CD4-positive, alpha-beta memory T cell (primary cell): ENCODE measurements at regions of chr5 and their contacts with region 1.

Region 1: GRCh38 chr5:73201547-73202513 is 28.8 kb downstream of the TMEM174 start:
- DNase-seq: peak; percentile 53 to 62 (median 55)
- H3K4me3 ChIP-seq: no peak overlapping the region
- H3K4me3 Mint-ChIP-seq: peak overlapping the region in 6 of 8 donors; percentile 31 to 77 (median 47)
- H3K27ac ChIP-seq: no peak overlapping the region
- H3K27ac Mint-ChIP-seq: no peak overlapping the region
- H3K4me1 ChIP-seq: peaks cover 7% of the 10 kb centered on the region
- H3K4me1 Mint-ChIP-seq: peaks cover 0 to 6% (median 3%) of the 10 kb centered on the region in 4 donors
- H3K27me3 ChIP-seq: peaks cover 4% of the 10 kb centered on the region
- H3K27me3 Mint-ChIP-seq: peaks cover 34 to 36% of the 10 kb centered on the region in 2 donors

Region 2: DNA sequence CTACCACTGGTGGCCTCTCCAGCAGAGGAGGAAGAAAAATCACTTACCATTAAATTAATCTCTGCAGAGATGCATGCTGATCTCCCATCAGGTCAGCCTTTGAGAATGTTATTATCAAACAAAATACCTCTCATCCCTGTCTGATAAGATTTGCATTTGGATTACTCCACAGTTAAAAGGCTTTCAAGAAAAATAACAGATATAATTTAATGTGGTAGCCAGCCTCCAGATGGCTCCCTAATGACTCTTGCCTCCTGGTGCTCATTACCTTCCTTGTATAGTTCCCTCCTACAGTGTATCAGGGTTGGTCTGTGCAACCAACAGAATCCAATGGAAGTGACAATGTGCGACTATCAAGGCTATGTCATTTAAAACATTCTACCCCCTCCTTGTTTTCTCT is 448.9 kb before region 1 on chr5:
- CTCF ChIA-PET with region 1: no interaction called
- POLR2A ChIA-PET with region 1: no interaction called
- intact Hi-C with region 1: loop called (anchors 2 kb)
- DNase-seq: no peak
- H3K4me3 ChIP-seq: no peak overlapping the region
- H3K4me3 Mint-ChIP-seq: no peak overlapping the region
- H3K27ac ChIP-seq: no peak overlapping the region
- H3K27ac Mint-ChIP-seq: no peak overlapping the region
- H3K4me1 ChIP-seq: no peaks in the 10 kb centered on the region
- H3K4me1 Mint-ChIP-seq: no peaks in the 10 kb centered on the region
- H3K27me3 ChIP-seq: no peaks in the 10 kb centered on the region
- H3K27me3 Mint-ChIP-seq: peaks cover 3 to 4% of the 10 kb centered on the region in 2 donors

Region 3: DNA sequence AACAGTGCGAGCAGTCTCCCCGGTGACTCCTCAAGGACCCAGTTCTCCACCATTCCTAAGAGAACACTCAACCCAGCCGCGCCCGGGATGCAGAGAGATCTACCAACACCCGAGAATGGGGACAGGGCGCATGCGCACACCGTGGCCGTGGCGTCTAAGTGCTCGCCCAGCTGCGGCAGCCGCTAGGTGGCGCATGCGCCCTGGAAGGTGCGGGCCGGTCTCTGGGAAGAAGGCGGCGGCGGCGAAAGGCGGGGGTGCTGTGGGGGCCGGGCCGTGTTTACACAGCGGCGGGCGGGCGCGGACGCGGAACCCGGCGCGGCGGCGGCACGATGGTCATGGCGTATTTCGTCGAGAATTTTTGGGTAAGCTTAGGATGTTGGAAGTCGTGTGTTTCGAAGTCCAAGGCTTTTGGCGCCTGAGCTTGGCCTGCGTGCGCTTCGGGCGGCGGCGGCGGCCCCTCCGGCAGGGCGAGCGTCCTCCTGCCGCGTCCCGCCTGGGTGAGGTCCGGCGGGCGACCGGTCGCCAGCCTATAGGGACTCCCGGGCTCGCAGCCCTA is 246.0 kb before region 1 on chr5 and contains the start of gene FCHO2:
- CTCF ChIA-PET with region 1: interaction called, 10 read pairs
- POLR2A ChIA-PET with region 1: no interaction called
- intact Hi-C with region 1: loop called (anchors 1 kb)
- DNase-seq: peak; percentile 92 to 95 (median 93)
- H3K4me3 ChIP-seq: peak within 1 kb of the TSS; percentile 85 to 96
- H3K4me3 Mint-ChIP-seq: peak within 1 kb of the TSS; percentile 90 to 99 (median 94)
- H3K27ac ChIP-seq: peak within 1 kb of the TSS; percentile 29
- H3K27ac Mint-ChIP-seq: peak within 1 kb of the TSS; percentile 85 to 91 (median 87)
- H3K4me1 ChIP-seq: peaks cover 15% of the 10 kb centered on the region
- H3K4me1 Mint-ChIP-seq: peaks cover 13 to 19% (median 13%) of the 10 kb centered on the region in 4 donors
- H3K27me3 ChIP-seq: no peaks in the 10 kb centered on the region
- H3K27me3 Mint-ChIP-seq: peaks cover 14 to 34% of the 10 kb centered on the region in 2 donors
- total RNA-seq, gene FCHO2: 6.1 to 6.3 TPM

Region 4: GRCh38 chr5:73088026-73088425 is 113.8 kb before region 1 on chr5:
- CTCF ChIA-PET with region 1: interaction called, 3 read pairs
- POLR2A ChIA-PET with region 1: no interaction called
- intact Hi-C with region 1: loop called (anchors 2 kb)
- DNase-seq: no peak
- H3K4me3 ChIP-seq: no peak overlapping the region
- H3K4me3 Mint-ChIP-seq: no peak overlapping the region
- H3K27ac ChIP-seq: no peak overlapping the region
- H3K27ac Mint-ChIP-seq: no peak overlapping the region
- H3K4me1 ChIP-seq: no peaks in the 10 kb centered on the region
- H3K4me1 Mint-ChIP-seq: no peaks in the 10 kb centered on the region
- H3K27me3 ChIP-seq: no peaks in the 10 kb centered on the region
- H3K27me3 Mint-ChIP-seq: peaks cover 0 to 1% of the 10 kb centered on the region in 2 donors

Region 5: DNA sequence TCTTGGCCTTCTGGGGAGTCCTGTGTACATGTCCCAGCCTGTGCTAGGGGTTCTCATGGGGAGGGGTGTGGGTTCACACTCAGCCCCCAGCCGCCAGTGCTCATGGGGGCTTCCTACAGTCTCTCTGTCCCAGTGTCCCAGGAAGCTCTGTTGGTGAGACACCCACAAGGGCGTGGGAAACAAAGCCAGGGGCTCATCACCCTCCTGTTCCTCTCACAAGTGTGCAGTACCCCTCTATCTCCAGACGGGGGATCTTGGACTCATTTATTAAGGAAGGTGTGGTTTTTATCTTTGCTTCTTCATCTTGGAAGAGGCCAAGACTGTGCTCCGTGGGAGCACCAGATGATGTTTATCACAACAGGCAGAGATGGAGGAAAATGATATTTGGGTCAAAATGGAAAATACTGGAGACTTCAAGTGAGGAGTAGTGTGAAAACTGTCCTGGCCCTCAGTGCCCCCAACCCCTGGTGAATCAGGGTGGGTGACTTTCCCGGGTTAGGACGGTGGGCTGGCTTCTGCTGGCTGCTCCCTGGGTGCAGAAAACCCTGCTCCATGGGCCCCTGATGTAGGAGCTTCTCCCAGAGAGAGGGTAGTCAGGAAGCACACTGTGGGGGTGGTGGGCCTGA is 66.3 kb before region 1 on chr5:
- CTCF ChIA-PET with region 1: no interaction called
- POLR2A ChIA-PET with region 1: no interaction called
- intact Hi-C with region 1: loop called (anchors 1 kb)
- DNase-seq: no peak
- H3K4me3 ChIP-seq: no peak overlapping the region
- H3K4me3 Mint-ChIP-seq: no peak overlapping the region
- H3K27ac ChIP-seq: no peak overlapping the region
- H3K27ac Mint-ChIP-seq: no peak overlapping the region
- H3K4me1 ChIP-seq: no peaks in the 10 kb centered on the region
- H3K4me1 Mint-ChIP-seq: no peaks in the 10 kb centered on the region
- H3K27me3 ChIP-seq: peaks cover 16% of the 10 kb centered on the region
- H3K27me3 Mint-ChIP-seq: peaks cover 19 to 31% of the 10 kb centered on the region in 2 donors

Region 6: GRCh38 chr5:73215891-73216610 is 14.2 kb after region 1 on chr5:
- CTCF ChIA-PET with region 1: interaction called, 12 read pairs
- POLR2A ChIA-PET with region 1: interaction called, 3 read pairs
- intact Hi-C with region 1: no loop called
- DNase-seq: peak; percentile 53 to 59 (median 57)
- H3K4me3 ChIP-seq: peak overlapping the region in 1 of 2 donors; percentile 28
- H3K4me3 Mint-ChIP-seq: peak overlapping the region in 7 of 8 donors; percentile 19 to 69 (median 56)
- H3K27ac ChIP-seq: no peak overlapping the region
- H3K27ac Mint-ChIP-seq: no peak overlapping the region
- H3K4me1 ChIP-seq: peaks cover 11% of the 10 kb centered on the region
- H3K4me1 Mint-ChIP-seq: peaks cover 6 to 10% (median 7%) of the 10 kb centered on the region in 4 donors
- H3K27me3 ChIP-seq: peaks cover 28% of the 10 kb centered on the region
- H3K27me3 Mint-ChIP-seq: peaks cover 47 to 50% of the 10 kb centered on the region in 2 donors